Cardiac septum (tissue), 1 donor: ENCODE measurements at regions of chr1 and their contacts with region 1.

Region 1: GRCh38 chr1:200367841-200368534 is 41.8 kb downstream of the ZNF281 start:
- DNase-seq: no peak

Region 2: DNA sequence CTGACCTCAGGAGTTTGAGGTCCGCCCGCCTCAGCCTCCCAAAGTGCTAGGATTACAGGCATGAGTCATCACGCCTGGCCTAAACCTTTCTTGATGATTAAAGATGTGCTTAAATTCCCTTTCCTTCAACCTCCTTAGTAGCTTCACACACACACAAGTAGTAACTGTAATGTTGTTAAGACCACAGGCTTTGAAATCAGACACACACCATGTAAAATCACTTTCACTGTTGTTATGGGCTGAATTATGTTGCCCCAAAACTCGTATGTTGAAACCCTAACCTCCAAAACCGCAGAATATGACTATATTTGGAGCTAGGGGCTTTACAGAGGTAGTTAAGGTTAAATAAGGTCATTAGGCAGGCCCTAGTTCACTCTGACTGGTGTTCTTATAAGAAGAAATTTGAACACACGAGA is 160.3 kb before region 1 on chr1:
- intact Hi-C with region 1: no loop called
- DNase-seq: no peak

Region 3: GRCh38 chr1:200409761-200410565 is 42.0 kb after region 1 on chr1 and contains the start of gene ZNF281:
- intact Hi-C with region 1: loop called (anchors 5 kb)
- DNase-seq: peak; percentile 98
- total RNA-seq, gene ZNF281: 8.5 TPM

Region 4: GRCh38 chr1:200473698-200474371 is 105.8 kb after region 1 on chr1:
- intact Hi-C with region 1: no loop called
- DNase-seq: no peak